Psoas muscle (tissue), 8 donors: ENCODE measurements at regions of chr13 and their contacts with region 1.

Region 1: DNA sequence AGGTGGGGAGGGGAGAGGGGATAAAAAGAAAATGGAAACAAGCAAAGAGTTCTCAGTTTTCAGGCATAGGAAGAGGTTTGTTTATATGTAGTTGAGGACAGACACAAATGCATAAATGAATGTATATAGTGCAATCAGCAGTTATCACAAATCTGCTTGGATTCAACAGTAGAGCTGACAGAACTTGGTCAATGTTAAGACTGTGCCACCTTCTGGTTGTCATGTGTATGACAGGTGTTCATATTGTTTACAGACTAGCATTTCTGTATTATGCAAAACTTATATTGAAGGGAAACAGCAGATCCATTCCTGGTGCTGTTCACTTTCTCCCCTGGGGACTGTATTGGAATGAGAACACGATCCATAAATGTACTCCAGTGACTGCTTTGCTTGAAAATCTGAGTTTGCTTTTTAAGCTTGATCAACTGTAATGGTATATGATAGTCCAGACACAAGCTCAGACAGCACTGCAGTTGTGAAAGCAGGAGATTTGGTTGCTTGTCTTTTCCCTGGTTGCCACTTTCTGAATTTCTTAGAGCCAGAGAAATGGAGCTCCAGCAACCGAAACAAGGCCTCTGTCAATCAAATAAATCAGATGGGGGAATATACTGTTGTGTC is 319.5 kb upstream of the OBI1 start:
- DNase-seq: no peak
- ATAC-seq: peak in 2 of 4 donors; percentile 51 to 61
- H3K4me3 ChIP-seq: no peak overlapping the region
- H3K27ac ChIP-seq: no peak overlapping the region
- H3K4me1 ChIP-seq: no peaks in the 10 kb centered on the region
- H3K27me3 ChIP-seq: peaks cover 0 to 4% (median 0%) of the 10 kb centered on the region in 3 donors
- CTCF ChIP-seq: peak; percentile 57

Region 2: DNA sequence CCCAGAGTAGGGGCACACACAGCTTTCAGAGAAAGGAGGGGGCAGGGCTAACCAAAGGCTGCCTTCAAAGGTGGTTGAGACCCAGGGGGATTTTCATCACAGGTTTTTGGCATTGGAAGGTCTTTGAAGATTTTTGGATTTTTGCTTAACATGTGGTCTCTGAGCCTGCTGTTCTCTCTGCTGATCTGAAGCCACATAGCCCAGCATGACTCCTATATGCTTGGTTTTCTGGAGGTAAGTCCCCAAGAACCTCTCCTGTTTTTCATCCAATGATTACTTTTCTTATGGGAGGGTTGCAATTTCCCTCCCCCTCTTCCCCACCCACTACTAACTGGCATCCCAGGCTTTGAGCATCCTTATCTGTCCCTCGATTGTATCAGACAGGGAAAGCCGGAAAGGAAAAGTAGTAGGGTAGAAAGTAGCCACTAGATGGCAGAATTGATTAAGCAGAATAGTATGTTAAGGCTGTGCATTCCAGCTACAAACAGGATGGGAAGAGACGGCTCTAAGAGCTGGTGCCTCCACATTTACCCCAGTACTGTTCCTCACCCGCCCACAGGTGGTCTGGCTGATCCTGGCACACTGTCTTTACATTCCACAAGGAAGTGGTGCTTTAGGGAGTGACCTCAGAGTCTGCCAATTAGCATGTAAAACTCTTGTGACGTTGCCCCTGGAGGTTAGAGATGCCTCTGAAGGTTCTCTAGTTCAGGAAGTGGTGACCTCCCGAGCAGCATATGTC is 840.9 kb before region 1 on chr13:
- intact Hi-C with region 1: loop called (anchors 2 to 5 kb)
- DNase-seq: no peak
- ATAC-seq: peak in 3 of 4 donors; percentile 51 to 79 (median 56)
- H3K4me3 ChIP-seq: no peak overlapping the region
- H3K27ac ChIP-seq: no peak overlapping the region
- H3K4me1 ChIP-seq: no peaks in the 10 kb centered on the region
- H3K27me3 ChIP-seq: no peaks in the 10 kb centered on the region
- CTCF ChIP-seq: peak; percentile 56

Region 3: GRCh38 chr13:78309497-78310180 is 668.9 kb before region 1 on chr13:
- intact Hi-C with region 1: loop called in 1 of 2 experiments (anchors 5 kb)
- DNase-seq: no peak
- ATAC-seq: no peak
- H3K4me3 ChIP-seq: no peak overlapping the region
- H3K27ac ChIP-seq: no peak overlapping the region
- H3K4me1 ChIP-seq: no peaks in the 10 kb centered on the region
- H3K27me3 ChIP-seq: no peaks in the 10 kb centered on the region
- CTCF ChIP-seq: no peak

Region 4: DNA sequence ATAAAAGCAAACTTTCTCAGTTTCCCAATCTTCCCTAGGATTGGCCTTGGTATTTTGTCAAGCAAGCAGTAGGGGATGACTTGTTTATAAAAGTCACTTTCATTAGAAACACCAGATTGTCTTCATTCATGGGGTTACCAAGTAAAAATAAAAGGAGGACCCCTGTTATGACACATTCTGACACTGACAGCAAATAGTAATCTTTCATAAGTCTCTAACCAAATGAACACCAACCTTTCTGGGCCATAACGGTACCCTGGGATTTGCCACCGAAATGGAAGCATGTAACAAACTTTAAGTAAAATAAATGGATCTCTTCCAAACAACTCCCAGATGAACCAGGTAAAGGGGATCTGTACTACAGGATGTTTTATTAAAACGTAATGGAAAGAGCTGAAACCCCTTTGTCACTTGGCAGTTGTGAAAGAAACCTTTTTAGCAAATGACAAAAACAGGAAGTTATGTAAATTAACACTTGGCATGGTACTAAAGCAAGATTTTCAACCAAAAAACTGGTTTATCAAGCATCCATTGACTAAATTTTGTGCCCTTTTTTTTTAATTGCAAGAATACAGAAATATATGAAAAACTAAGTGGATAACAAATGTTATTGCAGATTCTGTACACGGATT is 92.0 kb after region 1 on chr13:
- intact Hi-C with region 1: no loop called
- DNase-seq: no peak
- ATAC-seq: no peak
- H3K4me3 ChIP-seq: no peak overlapping the region
- H3K27ac ChIP-seq: no peak overlapping the region
- H3K4me1 ChIP-seq: no peaks in the 10 kb centered on the region
- H3K27me3 ChIP-seq: no peaks in the 10 kb centered on the region
- CTCF ChIP-seq: no peak

Region 5: DNA sequence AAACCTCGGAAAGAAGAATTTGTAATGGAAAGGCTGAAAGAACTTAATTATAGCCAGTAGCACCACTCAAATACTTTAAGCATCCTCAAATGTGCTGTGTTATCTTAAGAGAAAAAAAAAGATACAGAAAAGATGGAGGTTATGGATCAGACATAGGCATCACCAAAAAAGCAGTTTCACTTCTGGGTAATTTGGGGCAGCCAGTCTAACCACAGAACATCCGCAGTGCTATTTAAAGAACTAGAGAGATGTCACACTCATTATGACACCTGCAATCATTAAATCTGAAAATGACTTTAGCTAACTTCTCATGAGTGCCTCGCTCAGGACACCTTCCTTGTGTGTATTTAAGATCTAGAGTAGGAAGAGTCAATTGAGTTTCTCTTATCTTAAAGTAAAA is 215.8 kb after region 1 on chr13:
- intact Hi-C with region 1: no loop called
- DNase-seq: no peak
- ATAC-seq: no peak
- H3K4me3 ChIP-seq: no peak overlapping the region
- H3K27ac ChIP-seq: no peak overlapping the region
- H3K4me1 ChIP-seq: no peaks in the 10 kb centered on the region
- H3K27me3 ChIP-seq: no peaks in the 10 kb centered on the region
- CTCF ChIP-seq: no peak